Left cardiac atrium (tissue), 4 donors: ENCODE measurements at regions of chr3 and their contacts with region 1.

Region 1: GRCh38 chr3:177197041-177197727 is at the start of gene TBL1XR1:
- DNase-seq: peak; percentile 91
- ATAC-seq: peak; percentile 83 to 85
- total RNA-seq, gene TBL1XR1: 118 to 125 TPM

Region 2: DNA sequence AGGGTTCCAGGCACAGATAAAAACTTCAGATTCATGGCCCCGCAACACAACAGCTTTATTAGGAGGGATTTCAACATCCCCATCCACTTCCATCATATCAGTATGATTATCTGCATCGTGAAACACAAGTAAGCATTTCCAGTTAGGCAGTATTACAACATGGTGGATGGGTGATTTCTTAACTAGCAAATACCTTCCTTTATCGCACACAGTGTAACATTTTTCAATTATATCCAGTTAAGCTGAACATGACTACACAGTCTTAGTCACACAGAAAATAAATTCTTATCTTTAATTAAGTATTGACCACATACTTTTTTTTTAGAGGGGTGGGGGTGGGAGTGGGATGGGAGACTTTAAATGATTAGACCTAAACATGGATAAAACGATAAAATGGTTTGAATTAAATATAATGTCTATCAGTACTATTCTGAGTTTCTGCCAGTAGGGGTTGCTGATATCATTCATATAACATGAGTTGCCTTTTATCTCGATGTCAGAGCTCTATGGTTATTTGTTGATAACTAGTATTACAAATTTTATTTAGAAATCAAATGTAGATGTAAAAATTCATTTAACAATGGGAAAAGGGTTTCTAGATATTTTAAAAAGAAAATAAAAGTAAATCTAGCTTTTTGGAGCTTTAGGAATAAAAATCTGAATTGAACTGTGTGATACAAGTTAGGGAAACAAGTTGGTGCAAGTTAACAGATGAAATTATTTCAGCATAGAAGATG is 146.5 kb before region 1 on chr3:
- intact Hi-C with region 1: loop called (anchors 5 kb)
- DNase-seq: no peak
- ATAC-seq: peak; percentile 63 to 68

Region 3: GRCh38 chr3:177126015-177126773 is 71.0 kb before region 1 on chr3:
- intact Hi-C with region 1: loop called in 1 of 2 experiments (anchors 10 kb)
- DNase-seq: no peak
- ATAC-seq: peak; percentile 79 to 95

Region 4: DNA sequence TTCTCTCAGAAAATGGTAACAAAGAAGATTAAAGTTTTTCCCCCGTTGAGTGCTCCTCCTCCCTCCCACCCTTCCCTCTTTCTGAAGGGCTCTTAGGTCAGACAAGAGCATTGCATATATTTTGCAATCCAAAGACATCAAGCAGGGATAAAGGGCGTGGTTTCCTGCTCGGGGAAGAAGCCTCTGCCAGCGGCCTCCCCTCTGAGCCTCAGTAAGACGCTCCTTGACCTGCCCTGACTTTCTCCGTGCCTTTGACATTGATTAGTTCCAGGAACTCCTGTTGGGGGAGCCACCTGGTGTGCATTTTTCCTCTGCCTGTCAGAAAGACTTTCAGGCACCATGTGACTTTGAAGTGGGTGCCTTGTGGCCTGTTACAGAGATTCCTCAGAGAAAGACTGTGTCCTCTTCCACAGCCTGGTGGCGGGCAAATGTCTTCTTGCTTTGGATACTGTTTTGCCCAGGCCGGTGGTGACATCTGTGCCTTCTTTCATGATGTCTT is 87.2 kb after region 1 on chr3:
- intact Hi-C with region 1: no loop called
- DNase-seq: peak; percentile 48
- ATAC-seq: peak in 1 of 2 donors; percentile 85

Region 5: GRCh38 chr3:177359593-177360357 is 162.6 kb after region 1 on chr3:
- intact Hi-C with region 1: loop called (anchors 1 to 2 kb)
- DNase-seq: peak; percentile 96
- ATAC-seq: peak; percentile 90 to 93

Region 6: DNA sequence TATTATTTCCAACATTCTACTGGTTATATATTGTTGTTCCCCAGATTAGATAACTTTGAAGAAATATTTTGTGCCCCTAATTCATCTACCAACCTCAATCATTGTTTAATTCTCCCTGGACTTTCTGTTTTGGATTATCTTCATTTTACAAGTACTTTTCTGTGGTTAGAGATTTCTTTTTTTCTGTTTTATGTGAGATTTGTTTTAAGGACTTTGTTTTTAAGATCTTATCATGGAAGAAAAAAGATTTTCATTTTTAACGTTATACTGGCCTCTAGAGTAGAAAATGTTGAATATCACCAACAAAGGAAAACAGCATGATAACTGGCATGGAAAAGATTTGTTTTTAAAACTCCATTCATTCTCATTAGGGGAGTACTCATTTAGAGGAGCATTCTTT is 1128.1 kb after region 1 on chr3:
- intact Hi-C with region 1: loop called in 1 of 2 experiments (anchors 10 kb)
- DNase-seq: no peak
- ATAC-seq: no peak